ENCODE measurements at regions of chr12 and their contacts with region 1.

Region 1: DNA sequence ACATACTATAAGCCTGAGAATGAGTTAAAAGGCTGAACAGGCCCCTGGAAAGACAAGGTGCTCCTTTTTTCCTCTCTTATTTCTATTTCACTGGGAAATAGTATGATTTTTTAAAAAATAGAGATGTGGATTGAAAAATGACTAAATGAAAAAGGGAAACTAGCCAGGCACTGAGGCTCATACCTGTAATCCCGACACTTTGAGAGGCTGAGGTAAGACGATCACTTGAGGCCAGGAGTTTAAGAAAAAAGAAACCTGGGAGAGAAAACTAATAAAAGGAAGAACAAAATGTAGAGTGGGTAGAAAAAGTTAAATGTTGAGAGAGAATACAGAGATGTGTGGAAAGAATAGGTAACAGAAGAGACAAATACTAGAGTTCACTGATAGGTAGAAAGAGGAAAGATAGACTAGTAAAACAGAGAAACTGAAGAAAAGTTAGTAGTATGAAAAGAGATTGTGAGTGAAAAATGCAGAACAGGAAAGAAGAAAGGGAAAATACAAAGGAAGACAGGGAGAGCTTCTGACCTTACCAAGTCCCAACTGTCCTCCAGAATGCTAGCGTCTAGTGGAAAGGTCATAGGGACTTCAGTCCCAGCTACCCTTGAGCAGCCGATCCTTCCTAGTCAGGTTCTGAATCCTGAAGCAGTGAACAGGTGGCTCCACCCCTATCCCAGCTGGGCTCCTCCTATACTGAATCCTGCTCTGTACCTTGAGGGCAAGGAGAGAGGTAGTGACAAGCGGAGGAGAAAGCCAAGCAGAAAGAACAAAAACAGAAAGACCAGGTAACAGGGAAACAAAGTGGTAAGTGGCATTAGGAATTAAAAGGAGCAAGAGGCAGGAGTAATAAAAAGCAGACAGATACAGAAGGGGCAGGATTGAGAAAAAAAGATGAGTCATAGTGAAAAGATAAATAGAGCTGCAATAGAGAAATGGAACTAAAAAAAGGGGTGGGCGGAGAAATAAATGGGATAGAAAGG is 7.3 kb downstream of the TMEM116 start:
- DNase-seq: no peak
- ATAC-seq: no peak
- H3K4me3 Mint-ChIP-seq: no peak overlapping the region
- H3K27ac Mint-ChIP-seq: no peak overlapping the region
- H3K4me1 Mint-ChIP-seq: peaks cover 48% of the 10 kb centered on the region
- H3K27me3 Mint-ChIP-seq: peaks cover 2% of the 10 kb centered on the region
- CTCF ChIP-seq: no peak

Region 2: GRCh38 chr12:111981987-111982386 is 23.7 kb before region 1 on chr12:
- CTCF ChIA-PET with region 1: no interaction called
- POLR2A ChIA-PET with region 1: no interaction called
- intact Hi-C with region 1: no loop called
- DNase-seq: no peak
- ATAC-seq: no peak
- H3K4me3 Mint-ChIP-seq: no peak overlapping the region
- H3K27ac Mint-ChIP-seq: no peak overlapping the region
- H3K4me1 Mint-ChIP-seq: no peaks in the 10 kb centered on the region
- H3K27me3 Mint-ChIP-seq: no peaks in the 10 kb centered on the region
- CTCF ChIP-seq: no peak

Region 3: DNA sequence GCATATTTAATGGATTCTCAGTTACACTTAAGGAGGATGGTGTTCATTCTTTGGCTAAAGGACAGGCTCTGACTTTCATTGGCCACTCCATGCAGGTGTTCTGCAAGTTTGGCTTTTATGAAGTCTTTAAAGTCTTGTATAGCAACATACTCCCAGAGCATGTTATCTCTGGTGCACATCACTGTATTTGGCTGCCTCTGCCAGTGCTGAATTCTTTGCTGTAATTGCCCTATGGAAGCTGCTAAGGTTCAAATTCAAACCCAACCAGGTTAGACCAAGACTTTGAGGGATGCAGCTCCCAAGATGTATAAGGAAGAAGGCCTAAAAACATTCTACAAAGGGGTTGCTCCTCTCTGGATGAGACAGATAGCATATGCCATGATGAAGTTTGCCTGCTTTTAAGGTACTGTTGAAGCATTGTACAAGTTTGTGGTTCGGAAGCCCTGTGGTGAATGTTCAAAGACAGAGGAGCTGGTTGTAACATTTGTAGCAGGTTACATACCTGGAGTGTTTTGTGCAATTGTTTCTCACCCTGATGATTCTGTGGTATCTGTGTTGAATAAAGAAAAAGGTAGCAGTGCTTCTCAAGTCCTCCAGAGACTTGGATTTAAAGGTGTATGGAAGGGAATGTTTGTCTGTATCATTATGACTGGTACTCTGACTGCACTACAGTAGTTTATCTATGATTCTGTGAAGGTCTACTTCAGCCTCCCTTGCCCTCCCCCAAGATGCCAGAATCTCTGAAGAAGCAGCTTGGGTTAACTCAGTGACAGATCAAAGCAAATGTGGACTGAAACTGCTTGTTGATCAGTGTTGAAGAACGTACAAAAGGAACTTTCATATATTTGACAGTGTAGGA is 12.2 kb before region 1 on chr12:
- CTCF ChIA-PET with region 1: no interaction called
- POLR2A ChIA-PET with region 1: interaction called, 4 read pairs
- intact Hi-C with region 1: loop called (anchors 1 kb)
- DNase-seq: no peak
- ATAC-seq: peak; percentile 37
- H3K4me3 Mint-ChIP-seq: peak overlapping the region; percentile 77
- H3K27ac Mint-ChIP-seq: no peak overlapping the region
- H3K4me1 Mint-ChIP-seq: peaks cover 46% of the 10 kb centered on the region
- H3K27me3 Mint-ChIP-seq: peaks cover 11% of the 10 kb centered on the region
- CTCF ChIP-seq: no peak